OCI-LY7 (cell line): ENCODE measurements at regions of chr9 and their contacts with region 1.

Region 1: DNA sequence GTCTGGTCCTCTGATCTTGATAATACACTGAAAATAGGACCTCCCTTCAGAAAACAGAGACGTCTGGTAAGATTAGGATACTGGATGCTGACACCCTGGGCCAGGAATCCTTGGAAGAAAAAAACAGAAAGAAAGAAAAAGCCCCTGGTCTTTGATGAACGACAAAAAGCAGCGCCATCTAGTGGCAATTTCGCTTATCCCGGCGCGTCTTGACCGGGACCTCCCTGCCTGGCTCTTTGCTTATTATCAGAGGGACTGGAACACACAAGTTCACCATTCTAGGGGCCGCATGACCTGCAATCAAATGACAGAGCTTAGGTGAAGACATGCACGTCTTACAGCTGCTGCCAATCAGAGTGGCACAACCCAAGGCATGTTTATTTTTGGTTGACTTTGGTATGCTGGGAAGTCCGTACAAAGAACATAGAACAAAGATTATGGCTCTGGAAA is 114.9 kb upstream of the NFIB start:
- DNase-seq: peak; percentile 70
- H3K4me3 ChIP-seq: no peak overlapping the region
- H3K27ac ChIP-seq: no peak overlapping the region
- H3K4me1 ChIP-seq: no peaks in the 10 kb centered on the region
- CTCF ChIP-seq: peak; percentile 93

Region 2: GRCh38 chr9:13427587-13427986 is 1001.2 kb before region 1 on chr9:
- CTCF ChIA-PET with region 1: no interaction called
- POLR2A ChIA-PET with region 1: no interaction called
- intact Hi-C with region 1: loop called (anchors 1 kb)
- DNase-seq: peak; percentile 57
- H3K4me3 ChIP-seq: no peak overlapping the region
- H3K27ac ChIP-seq: no peak overlapping the region
- H3K4me1 ChIP-seq: no peaks in the 10 kb centered on the region
- CTCF ChIP-seq: peak; percentile 94

Region 3: DNA sequence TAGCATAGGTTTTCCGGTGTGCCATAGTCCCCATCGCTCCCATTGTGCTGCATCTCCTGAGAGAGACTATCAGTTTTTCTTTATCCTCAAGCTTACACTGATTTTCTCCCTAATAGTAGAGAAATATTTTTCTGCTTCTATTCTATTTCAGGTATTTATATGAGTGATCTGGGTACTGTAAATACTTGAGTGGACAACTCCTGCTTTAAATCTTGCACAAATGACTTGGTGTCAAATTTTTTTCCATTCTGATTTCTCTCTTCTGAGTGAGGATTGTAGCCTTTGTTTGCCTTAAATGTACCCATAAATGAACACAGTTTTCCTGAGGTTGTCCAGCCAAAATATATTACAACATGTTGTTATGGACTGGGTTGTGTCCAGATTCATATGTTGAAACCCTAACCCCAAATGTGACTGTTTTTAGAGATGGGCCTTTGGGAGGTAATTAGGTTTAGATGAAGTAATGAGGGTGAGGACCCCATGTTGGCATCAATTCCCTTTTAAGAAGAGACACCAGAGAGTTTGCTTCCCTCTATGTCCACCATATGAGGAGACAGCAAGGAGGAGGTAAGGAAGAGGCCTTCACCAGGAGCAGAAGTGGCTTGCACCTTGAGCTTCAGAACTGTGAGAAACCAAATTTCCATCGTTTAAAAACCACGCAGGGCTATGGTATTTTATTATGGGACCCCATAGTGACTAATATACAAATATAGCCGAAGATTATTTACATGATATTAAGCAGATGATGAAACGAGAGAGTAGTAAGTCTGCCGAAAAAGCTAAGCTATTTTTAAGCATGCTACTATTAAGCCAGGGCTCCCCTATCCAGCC is 812.9 kb before region 1 on chr9:
- CTCF ChIA-PET with region 1: no interaction called
- POLR2A ChIA-PET with region 1: interaction called, 3 read pairs
- intact Hi-C with region 1: loop called (anchors 10 kb)
- DNase-seq: no peak
- H3K4me3 ChIP-seq: no peak overlapping the region
- H3K27ac ChIP-seq: no peak overlapping the region
- H3K4me1 ChIP-seq: no peaks in the 10 kb centered on the region
- CTCF ChIP-seq: no peak

Region 4: GRCh38 chr9:14062586-14063221 is 366.1 kb before region 1 on chr9:
- CTCF ChIA-PET with region 1: no interaction called
- POLR2A ChIA-PET with region 1: no interaction called
- intact Hi-C with region 1: no loop called
- DNase-seq: no peak
- H3K4me3 ChIP-seq: no peak overlapping the region
- H3K27ac ChIP-seq: no peak overlapping the region
- H3K4me1 ChIP-seq: no peaks in the 10 kb centered on the region
- CTCF ChIP-seq: no peak

Region 5: GRCh38 chr9:14500705-14501104 is 71.9 kb after region 1 on chr9:
- CTCF ChIA-PET with region 1: no interaction called
- POLR2A ChIA-PET with region 1: no interaction called
- intact Hi-C with region 1: no loop called
- DNase-seq: no peak
- H3K4me3 ChIP-seq: no peak overlapping the region
- H3K27ac ChIP-seq: no peak overlapping the region
- H3K4me1 ChIP-seq: no peaks in the 10 kb centered on the region
- CTCF ChIP-seq: no peak